ENCODE measurements at regions of chr16 and their contacts with region 1.

Region 1: DNA sequence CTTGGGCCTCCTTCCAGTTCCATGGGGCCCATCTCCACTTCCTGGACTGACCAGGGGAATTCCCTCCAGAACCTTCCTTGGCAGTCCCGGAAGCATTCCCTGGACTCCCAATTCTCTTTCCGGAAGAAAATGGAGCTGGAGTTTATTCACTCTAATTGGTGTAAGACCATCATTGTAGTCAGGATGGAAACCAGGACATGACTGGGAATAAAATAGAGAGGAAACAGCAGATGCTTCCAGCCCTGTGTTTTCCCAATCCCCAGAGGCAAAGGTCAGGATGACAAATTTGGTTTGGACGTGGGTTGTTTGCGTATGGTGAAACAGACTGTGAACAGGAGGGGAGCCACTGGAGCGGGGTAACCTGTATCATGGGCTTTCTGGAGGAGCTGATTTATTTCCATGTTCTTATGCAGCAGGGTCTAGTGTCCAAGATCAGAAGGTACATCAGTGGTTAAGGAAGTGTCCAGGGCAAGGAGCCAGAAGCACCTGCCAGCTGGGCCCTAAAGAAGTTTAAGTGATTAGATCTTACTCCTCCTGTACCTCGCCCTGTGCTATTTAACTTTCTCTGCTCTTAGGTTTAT is 8.5 kb upstream of the LONP2 start:
- DNase-seq: no peak
- ATAC-seq: no peak

Region 2: GRCh38 chr16:48632137-48632774 is 396.6 kb after region 1 on chr16:
- intact Hi-C with region 1: loop called (anchors 5 kb)
- DNase-seq: no peak
- ATAC-seq: no peak